PC-9 (cell line): ENCODE measurements at regions of chr2 and their contacts with region 1.

Region 1: DNA sequence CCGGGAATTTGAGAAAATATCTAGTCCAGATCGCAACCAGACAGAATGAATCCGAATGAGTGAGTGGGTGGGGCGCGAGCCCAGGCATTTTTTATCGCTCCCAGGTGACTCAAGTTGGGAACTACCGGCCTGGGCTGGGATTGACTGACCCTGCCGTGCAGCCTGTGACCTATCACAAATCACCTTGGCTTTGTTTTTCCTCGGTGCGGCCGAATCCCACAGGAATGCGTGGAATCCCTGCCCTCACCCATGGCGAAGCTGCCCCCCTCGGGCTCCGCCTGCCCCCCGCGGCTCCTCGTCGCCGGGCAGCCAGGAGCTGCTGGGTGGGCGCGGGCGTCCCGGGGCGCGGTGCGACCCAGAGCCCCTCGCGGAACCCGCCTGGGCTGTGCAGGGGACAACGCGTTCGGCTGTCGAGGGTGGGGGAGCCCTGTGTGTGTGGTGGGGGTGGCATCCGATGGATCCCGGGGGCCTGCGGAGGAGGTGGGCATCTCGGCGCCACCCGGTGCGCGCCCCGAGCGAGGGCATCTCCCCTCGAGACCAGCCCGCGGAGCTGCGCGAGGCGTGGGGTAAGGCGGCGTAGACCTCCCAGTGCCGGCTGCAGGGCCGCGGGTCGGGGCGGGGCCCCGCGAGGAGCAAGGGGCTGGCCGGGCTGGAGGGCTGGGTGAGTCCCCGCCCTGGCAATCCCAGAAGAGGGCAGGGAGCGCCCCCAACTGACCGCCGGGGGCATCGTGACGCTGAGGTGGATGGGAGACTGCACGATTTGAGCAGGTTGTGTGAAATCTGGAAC is 16.5 kb downstream of the B3GNT7 start:
- DNase-seq: peak; percentile 86 to 92
- H3K4me3 ChIP-seq: peak overlapping the region; percentile 69
- H3K27ac ChIP-seq: peak overlapping the region; percentile 68
- H3K4me1 ChIP-seq: peaks cover 23% of the 10 kb centered on the region
- H3K27me3 ChIP-seq: no peaks in the 10 kb centered on the region
- CTCF ChIP-seq: peak; percentile 83

Region 2: GRCh38 chr2:230824406-230824978 is 587.5 kb before region 1 on chr2:
- CTCF ChIA-PET with region 1: no interaction called
- POLR2A ChIA-PET with region 1: no interaction called
- intact Hi-C with region 1: loop called (anchors 2 kb)
- DNase-seq: peak; percentile 53 to 58
- H3K4me3 ChIP-seq: peak overlapping the region; percentile 31; the same call in 1 of the 2 replicates
- H3K27ac ChIP-seq: no peak overlapping the region
- H3K4me1 ChIP-seq: no peaks in the 10 kb centered on the region
- H3K27me3 ChIP-seq: 0 out of 2 replicates have a peak, but pooled peaks cover 3% of the 10 kb centered on the region
- CTCF ChIP-seq: peak; percentile 88

Region 3: GRCh38 chr2:231056453-231057424 is 355.3 kb before region 1 on chr2 and contains the start of gene PSMD1:
- CTCF ChIA-PET with region 1: no interaction called
- POLR2A ChIA-PET with region 1: no interaction called
- intact Hi-C with region 1: loop called (anchors 2 kb)
- DNase-seq: peak; percentile 71 to 90
- H3K4me3 ChIP-seq: peak within 1 kb of the TSS; percentile 95
- H3K27ac ChIP-seq: peak within 1 kb of the TSS; percentile 80
- H3K4me1 ChIP-seq: peaks cover 24% of the 10 kb centered on the region
- H3K27me3 ChIP-seq: no peaks in the 10 kb centered on the region
- CTCF ChIP-seq: peak; percentile 92
- total RNA-seq, gene PSMD1: 80.6 and 119 TPM in 2 replicates

Region 4: DNA sequence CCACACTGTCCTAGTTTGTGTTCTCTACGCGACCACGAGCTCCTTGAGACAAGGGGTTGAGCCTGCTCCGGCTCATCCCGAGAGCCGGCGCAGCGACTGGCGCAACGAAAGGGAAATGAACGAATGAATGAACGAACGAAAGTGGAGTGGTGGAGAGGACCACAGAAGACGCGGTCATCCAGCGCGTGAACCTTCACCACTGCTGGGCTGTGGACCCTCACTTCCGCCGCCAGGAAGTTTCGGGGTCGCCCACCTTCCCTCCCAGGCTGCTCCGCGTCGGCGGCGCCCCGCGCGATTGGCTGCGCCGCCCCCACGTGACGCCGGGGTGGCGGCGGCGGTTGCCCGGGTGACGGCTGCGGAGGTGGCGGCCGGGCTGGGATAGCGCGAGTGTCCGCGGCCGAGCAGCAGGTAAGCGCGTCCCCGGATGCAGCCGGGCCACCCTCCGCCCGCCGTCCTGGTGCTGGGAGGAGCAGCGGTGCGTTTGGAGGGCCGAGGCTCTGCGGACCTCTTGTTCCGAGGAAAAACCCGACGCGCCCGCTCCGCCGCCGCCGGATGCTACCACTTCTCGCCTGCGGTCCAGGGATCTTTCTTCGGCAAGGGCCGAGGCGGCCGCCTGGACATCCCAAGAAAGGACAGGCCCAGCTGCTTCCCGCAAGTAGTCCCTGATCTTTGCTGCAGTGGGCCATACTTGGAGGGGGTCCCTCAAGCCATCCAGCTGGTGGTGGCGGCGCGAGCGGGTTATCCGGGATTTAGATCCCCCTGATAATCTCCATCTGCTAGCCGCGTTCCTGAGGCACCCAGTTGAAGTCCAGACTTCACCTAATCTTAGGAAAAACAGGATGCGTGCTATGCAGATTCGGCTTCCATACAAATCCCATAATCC is 213.5 kb before region 1 on chr2 and contains the start of gene ARMC9:
- CTCF ChIA-PET with region 1: no interaction called
- POLR2A ChIA-PET with region 1: interaction called, 14 read pairs
- intact Hi-C with region 1: no loop called
- DNase-seq: peak; percentile 41 to 78
- H3K4me3 ChIP-seq: peak within 1 kb of the TSS; percentile 72
- H3K27ac ChIP-seq: no peak within 1 kb of the TSS
- H3K4me1 ChIP-seq: peaks cover 25% of the 10 kb centered on the region
- H3K27me3 ChIP-seq: peaks cover 17% of the 10 kb centered on the region; the same call in 1 of the 2 replicates
- CTCF ChIP-seq: no peak
- total RNA-seq, gene ARMC9: 23.4 and 29.7 TPM in 2 replicates

Region 5: GRCh38 chr2:231297108-231297908 is 114.7 kb before region 1 on chr2:
- CTCF ChIA-PET with region 1: no interaction called
- POLR2A ChIA-PET with region 1: interaction called, 18 read pairs
- intact Hi-C with region 1: loop called (anchors 1 kb)
- DNase-seq: peak; percentile 41 to 45
- H3K4me3 ChIP-seq: no peak overlapping the region
- H3K27ac ChIP-seq: no peak overlapping the region
- H3K4me1 ChIP-seq: peaks cover 34% of the 10 kb centered on the region
- H3K27me3 ChIP-seq: no peaks in the 10 kb centered on the region
- CTCF ChIP-seq: peak; percentile 76

Region 6: DNA sequence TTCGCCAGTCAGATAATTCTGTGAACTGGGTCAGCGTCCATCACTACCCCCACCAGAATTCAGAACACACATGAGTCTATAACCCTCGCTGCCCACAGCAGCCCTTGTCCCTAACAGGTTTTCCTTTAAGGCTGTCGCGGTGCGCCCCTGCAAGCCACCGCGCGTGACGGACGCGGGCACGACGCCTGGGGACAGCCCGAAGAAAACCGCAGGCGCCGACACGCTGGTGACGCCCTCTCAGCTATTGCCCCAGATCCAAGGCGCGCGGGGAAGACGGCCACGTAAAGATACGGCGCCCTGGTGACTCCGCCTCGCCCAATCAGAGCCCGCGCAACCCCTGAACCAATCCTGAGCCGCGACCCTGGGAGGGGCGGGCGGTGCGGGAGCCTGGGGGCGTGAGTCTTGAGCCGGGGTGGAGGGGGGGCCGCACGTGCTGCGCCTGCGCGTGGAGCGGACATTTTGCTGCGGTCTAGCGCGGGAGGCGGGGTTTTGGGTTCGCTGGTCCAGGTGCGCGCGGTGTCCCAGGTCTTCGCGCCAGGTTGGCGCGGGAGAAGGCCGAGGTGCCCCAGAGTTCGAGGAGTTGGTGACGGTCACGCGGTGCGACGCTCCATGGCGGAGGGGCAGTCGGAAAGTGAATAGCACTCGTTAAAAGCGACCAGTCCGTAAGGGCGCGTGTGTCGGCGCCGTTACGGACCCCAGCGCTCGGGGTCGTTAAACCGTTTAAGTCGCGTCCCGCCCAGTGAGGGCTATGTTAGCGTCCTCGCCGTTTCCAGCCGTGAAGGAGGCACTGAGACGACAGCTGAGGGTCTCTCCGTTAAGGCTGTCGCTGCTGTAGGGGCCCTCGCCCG is 102.3 kb after region 1 on chr2:
- CTCF ChIA-PET with region 1: no interaction called
- POLR2A ChIA-PET with region 1: no interaction called
- intact Hi-C with region 1: no loop called
- DNase-seq: peak; percentile 85 to 98
- H3K4me3 ChIP-seq: peak overlapping the region; percentile 91
- H3K27ac ChIP-seq: peak overlapping the region; percentile 70
- H3K4me1 ChIP-seq: peaks cover 15% of the 10 kb centered on the region
- H3K27me3 ChIP-seq: no peaks in the 10 kb centered on the region
- CTCF ChIP-seq: no peak